Activated B cell treated with CpG ODN at 0.5 μM for 24 hours (primary cell): ENCODE measurements at regions of chr6 and their contacts with region 1.

Region 1: GRCh38 chr6:158972241-158973233 is 27.5 kb downstream of the RSPH3 start:
- DNase-seq: no peak
- ATAC-seq: peak; percentile 60
- H3K4me3 Mint-ChIP-seq: no peak overlapping the region
- H3K27ac Mint-ChIP-seq: no peak overlapping the region
- H3K4me1 Mint-ChIP-seq: peaks cover 6% of the 10 kb centered on the region
- H3K27me3 Mint-ChIP-seq: no peaks in the 10 kb centered on the region
- CTCF ChIP-seq: peak; percentile 57

Region 2: DNA sequence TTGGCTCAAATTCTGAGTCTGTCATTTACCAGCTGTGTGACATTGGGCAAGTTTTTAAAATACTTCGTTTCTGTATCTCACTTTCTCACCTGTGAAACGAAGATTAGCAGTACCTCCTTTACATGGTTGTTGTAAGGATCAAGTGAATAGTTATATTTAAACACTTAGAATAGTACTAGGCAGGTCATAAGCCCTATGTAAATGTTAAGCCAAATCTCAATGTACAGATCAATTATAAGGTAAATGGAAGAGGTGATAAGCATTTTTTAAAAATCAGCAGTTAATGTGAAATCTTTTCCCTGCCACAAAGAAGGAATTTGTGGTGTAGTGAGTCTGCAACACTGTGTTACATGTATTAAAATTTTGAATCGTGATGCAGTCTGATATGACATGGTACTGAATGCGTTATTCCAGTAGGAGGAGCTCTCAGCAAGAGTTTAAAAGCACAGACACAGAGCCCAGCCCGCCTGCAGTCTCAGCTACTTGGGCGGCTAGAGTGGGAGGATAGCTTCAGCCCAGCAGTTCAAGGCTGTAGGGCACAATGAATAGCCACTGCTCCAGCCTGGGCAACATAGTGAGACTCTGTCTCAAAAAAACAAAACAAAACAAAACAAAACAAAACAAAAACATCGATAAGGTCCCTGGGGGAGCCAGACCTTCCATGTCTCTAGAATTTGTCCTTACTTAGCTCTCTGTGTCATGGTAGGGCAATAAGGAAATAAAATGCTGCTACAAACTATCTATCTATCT is 758.4 kb before region 1 on chr6:
- CTCF ChIA-PET with region 1: interaction called, 8 read pairs
- POLR2A ChIA-PET with region 1: no interaction called
- intact Hi-C with region 1: loop called (anchors 2 kb)
- DNase-seq: no peak
- ATAC-seq: peak; percentile 99
- H3K4me3 Mint-ChIP-seq: no peak overlapping the region
- H3K27ac Mint-ChIP-seq: no peak overlapping the region
- H3K4me1 Mint-ChIP-seq: peaks cover 3% of the 10 kb centered on the region
- H3K27me3 Mint-ChIP-seq: no peaks in the 10 kb centered on the region
- CTCF ChIP-seq: no peak

Region 3: GRCh38 chr6:158488065-158488464 is 484.5 kb before region 1 on chr6:
- CTCF ChIA-PET with region 1: no interaction called
- POLR2A ChIA-PET with region 1: no interaction called
- intact Hi-C with region 1: no loop called
- DNase-seq: no peak
- ATAC-seq: no peak
- H3K4me3 Mint-ChIP-seq: no peak overlapping the region
- H3K27ac Mint-ChIP-seq: no peak overlapping the region
- H3K4me1 Mint-ChIP-seq: no peaks in the 10 kb centered on the region
- H3K27me3 Mint-ChIP-seq: no peaks in the 10 kb centered on the region
- CTCF ChIP-seq: no peak

Region 4: DNA sequence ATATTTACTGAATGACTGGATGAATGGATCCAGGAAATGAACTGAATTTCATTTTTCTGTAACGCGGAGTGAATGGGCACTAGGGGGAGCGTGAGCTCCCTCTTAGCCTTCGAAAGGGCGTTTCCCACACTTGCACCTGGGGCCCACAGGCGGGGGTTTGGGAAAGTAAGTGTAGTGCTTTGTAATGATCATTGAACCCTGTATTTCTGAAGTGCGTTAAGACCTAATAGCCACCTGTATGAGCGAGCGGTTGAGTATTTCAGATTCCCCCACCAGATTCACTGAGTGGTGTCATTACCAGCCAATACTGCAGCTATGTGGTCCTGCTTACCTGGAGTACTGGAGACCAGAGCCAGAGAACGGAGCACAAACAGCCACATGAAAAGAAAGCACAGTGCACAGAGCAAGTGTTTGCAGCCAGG is 312.2 kb before region 1 on chr6:
- CTCF ChIA-PET with region 1: interaction called, 9 read pairs
- POLR2A ChIA-PET with region 1: no interaction called
- intact Hi-C with region 1: loop called (anchors 1 kb)
- DNase-seq: no peak
- ATAC-seq: peak; percentile 90
- H3K4me3 Mint-ChIP-seq: no peak overlapping the region
- H3K27ac Mint-ChIP-seq: no peak overlapping the region
- H3K4me1 Mint-ChIP-seq: peaks cover 9% of the 10 kb centered on the region
- H3K27me3 Mint-ChIP-seq: peaks cover 14% of the 10 kb centered on the region
- CTCF ChIP-seq: no peak

Region 5: DNA sequence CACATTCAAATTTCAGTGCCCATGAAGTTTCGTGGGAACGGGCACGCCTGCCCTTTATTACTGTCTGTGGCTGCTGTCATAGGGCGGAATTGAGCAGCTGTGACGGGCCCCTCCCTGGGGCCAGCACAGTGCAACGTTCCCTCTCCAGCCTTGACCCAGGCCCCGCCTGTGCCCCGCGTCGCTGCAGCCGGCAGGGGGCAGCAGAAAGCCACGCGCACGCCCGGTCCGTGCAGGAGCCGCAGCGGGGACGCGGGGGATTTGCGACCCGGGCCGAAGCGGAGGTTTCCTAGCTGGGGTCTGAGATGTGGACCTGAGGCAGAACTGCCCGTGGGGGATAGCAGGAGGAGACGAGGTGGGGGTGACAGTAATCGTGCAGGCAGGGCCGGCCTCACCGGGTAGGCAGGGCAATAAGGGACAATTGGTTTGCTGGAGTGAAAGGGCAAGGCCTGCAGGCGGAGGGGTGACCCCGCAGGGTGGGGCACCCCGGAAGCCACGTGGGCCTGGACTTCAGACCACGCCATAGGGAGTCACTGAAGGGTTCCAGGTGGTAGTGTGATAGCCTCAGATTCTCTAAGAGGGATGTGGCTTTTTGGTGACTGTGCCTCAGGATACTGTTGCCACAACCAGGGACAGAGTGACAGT is 268.2 kb before region 1 on chr6:
- CTCF ChIA-PET with region 1: interaction called, 54 read pairs
- POLR2A ChIA-PET with region 1: interaction called, 4 read pairs
- intact Hi-C with region 1: loop called (anchors 1 kb)
- DNase-seq: peak; percentile 89
- ATAC-seq: peak; percentile 95
- H3K4me3 Mint-ChIP-seq: peak overlapping the region; percentile 86
- H3K27ac Mint-ChIP-seq: peak overlapping the region; percentile 81
- H3K4me1 Mint-ChIP-seq: peaks cover 29% of the 10 kb centered on the region
- H3K27me3 Mint-ChIP-seq: no peaks in the 10 kb centered on the region
- CTCF ChIP-seq: peak; percentile 92

Region 6: GRCh38 chr6:158910484-158911348 is 61.8 kb before region 1 on chr6:
- CTCF ChIA-PET with region 1: no interaction called
- POLR2A ChIA-PET with region 1: no interaction called
- intact Hi-C with region 1: loop called (anchors 2 kb)
- DNase-seq: peak; percentile 36
- ATAC-seq: peak; percentile 76
- H3K4me3 Mint-ChIP-seq: peak overlapping the region; percentile 80
- H3K27ac Mint-ChIP-seq: peak overlapping the region; percentile 96
- H3K4me1 Mint-ChIP-seq: peaks cover 58% of the 10 kb centered on the region
- H3K27me3 Mint-ChIP-seq: no peaks in the 10 kb centered on the region
- CTCF ChIP-seq: no peak

Region 7: GRCh38 chr6:159349915-159350314 is 377.4 kb after region 1 on chr6:
- CTCF ChIA-PET with region 1: no interaction called
- POLR2A ChIA-PET with region 1: no interaction called
- intact Hi-C with region 1: no loop called
- DNase-seq: no peak
- ATAC-seq: no peak
- H3K4me3 Mint-ChIP-seq: no peak overlapping the region
- H3K27ac Mint-ChIP-seq: no peak overlapping the region
- H3K4me1 Mint-ChIP-seq: no peaks in the 10 kb centered on the region
- H3K27me3 Mint-ChIP-seq: peaks cover 1% of the 10 kb centered on the region
- CTCF ChIP-seq: no peak